Mammary epithelial cell (primary cell): ENCODE measurements at regions of chr2 and their contacts with region 1.

Region 1: DNA sequence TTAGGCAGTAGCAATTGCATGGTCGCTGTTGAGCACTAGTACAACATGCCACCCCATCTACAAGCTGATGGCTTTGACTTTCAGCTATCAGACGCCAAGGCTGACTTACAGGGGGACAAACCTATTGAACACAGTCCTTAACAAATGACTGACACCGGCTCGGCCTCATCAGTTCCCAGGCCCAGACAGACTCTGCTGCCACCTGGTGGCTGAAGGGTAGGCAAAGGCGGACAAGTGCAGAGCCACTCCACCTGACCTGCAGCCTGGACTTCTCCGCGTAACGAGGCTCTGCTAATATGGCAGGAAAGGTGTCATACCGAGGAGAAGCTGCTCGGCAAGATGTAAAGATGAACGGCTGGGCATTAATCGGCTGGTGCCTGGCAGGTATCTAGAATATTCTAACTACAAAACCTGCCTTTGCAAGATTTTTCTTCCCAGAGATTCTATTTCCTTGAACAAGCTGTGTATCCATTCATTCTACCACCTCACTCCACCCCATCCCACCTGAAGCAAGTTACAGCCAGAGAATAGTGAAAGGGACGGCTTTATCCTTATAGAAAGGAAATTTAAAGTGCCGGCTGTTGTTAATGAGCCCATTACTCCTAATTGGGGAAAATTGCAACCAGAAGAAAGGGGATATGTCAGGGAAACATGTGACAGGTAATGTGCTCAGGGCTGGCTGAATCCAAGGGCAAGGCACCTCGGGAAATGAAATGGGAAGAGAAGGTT is 67.4 kb downstream of the STEAP3 start:
- DNase-seq: peak; percentile 12
- H3K4me3 ChIP-seq: no peak overlapping the region
- H3K27ac ChIP-seq: no peak overlapping the region
- H3K4me1 ChIP-seq: no peaks in the 10 kb centered on the region
- H3K27me3 ChIP-seq: no peaks in the 10 kb centered on the region
- CTCF ChIP-seq: peak; percentile 24 to 64

Region 2: GRCh38 chr2:119218478-119219064 is 72.5 kb before region 1 on chr2:
- CTCF ChIA-PET with region 1: no interaction called
- dilution Hi-C with region 1: no loop called
- in situ Hi-C with region 1: no loop called
- intact Hi-C with region 1: loop called (anchors 1 kb)
- DNase-seq: peak; percentile 54
- H3K4me3 ChIP-seq: no peak overlapping the region
- H3K27ac ChIP-seq: no peak overlapping the region
- H3K4me1 ChIP-seq: peaks cover 21% of the 10 kb centered on the region
- H3K27me3 ChIP-seq: no peaks in the 10 kb centered on the region
- CTCF ChIP-seq: peak in 1 of 2 donors; percentile 34

Region 3: DNA sequence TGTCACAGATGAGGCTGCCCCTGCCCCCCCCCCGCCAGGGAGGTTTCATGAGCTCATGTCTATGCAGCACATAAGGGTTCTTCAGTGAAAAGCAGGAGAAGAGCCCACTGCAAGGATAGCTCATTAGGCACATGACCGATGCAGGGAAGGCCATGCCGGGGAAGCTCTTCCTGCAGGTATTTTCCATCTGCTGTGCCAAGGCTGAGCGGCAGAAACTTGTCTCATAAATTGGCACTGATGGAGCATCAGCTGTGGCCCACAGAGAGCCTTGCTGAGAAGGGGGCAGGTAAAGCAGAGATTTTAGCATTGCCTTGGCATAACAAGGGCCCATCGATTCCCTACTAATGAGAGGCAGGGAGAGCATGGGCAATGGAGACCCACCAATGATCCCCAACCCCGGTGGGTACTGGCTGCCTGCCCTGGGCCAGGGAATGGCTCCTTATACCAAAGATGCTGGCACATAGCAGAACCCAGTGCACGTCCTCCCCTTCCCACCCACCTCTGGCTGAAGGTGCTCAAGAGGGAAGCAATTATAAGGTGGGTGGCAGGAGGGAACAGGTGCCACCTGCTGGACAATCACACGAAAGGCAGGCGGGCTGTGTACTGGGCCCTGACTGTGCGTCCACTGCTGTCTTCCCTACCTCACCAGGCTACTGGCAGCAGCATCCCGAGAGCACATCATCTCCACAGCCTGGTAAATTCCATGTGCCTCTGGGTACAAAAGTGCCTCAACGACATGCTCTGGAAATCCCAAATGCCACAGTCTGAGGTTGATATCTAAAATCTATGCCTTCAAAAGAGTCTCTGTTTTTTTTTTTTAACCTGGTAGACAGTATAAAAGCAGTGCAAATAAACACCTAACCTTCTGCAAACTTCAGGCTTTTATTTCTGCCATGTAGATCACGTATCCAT is 26.0 kb before region 1 on chr2:
- CTCF ChIA-PET with region 1: no interaction called
- dilution Hi-C with region 1: no loop called
- in situ Hi-C with region 1: no loop called
- intact Hi-C with region 1: loop called (anchors 1 kb)
- DNase-seq: peak; percentile 53
- H3K4me3 ChIP-seq: no peak overlapping the region
- H3K27ac ChIP-seq: no peak overlapping the region
- H3K4me1 ChIP-seq: no peaks in the 10 kb centered on the region
- H3K27me3 ChIP-seq: no peaks in the 10 kb centered on the region
- CTCF ChIP-seq: peak; percentile 88 to 94

Region 4: GRCh38 chr2:119352357-119352756 is 61.3 kb after region 1 on chr2:
- CTCF ChIA-PET with region 1: no interaction called
- dilution Hi-C with region 1: loop called (anchors 5 kb)
- in situ Hi-C with region 1: no loop called
- intact Hi-C with region 1: no loop called
- DNase-seq: peak; percentile 4
- H3K4me3 ChIP-seq: no peak overlapping the region
- H3K27ac ChIP-seq: no peak overlapping the region
- H3K4me1 ChIP-seq: no peaks in the 10 kb centered on the region
- H3K27me3 ChIP-seq: no peaks in the 10 kb centered on the region
- CTCF ChIP-seq: no peak

Region 5: DNA sequence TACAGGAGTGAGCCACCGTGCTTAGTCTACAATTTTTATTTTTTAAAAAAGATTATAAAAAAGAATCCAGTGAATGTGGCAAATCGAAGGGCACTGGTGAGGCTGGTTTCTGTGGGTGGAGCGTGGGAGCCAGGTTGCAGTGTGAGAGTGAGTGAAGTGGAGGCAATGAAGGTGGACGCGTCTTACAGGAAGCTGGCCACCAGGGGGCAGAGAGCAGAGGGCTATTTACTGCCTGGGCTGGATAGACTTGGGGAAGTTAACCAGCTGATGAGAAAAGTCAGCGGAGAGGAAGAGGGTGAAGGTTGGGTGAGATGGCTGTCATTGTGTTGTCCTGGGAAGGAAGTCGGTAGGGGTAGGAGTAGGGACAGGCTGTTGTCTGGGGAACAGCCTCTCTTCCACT is 226.4 kb after region 1 on chr2:
- CTCF ChIA-PET with region 1: no interaction called
- dilution Hi-C with region 1: no loop called
- in situ Hi-C with region 1: no loop called
- intact Hi-C with region 1: no loop called
- DNase-seq: peak; percentile 27
- H3K4me3 ChIP-seq: no peak overlapping the region
- H3K27ac ChIP-seq: no peak overlapping the region
- H3K4me1 ChIP-seq: no peaks in the 10 kb centered on the region
- H3K27me3 ChIP-seq: peaks cover 4% of the 10 kb centered on the region
- CTCF ChIP-seq: peak; percentile 62 to 82